Sigmoid colon (tissue), 7 donors: ENCODE measurements at regions of chr3 and their contacts with region 1.

Region 1: DNA sequence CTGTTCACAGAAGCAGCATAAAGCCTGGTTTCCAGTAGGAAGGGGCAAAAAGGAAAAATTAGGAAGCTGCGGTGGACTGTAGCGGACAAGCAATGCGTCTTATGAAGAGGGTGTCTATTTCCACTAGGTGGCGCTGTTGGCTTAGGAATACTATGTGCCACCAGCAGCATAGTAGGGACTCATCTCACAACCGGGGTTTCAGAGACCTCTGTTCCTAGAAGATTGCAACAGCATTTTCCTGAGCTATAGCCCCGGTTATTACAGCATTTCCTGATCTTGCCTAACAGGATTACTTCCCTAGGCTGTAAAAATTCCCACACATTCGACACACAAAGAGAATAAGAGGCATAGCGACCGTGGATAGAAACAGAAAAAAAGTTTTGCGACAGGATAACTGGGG is 683.0 kb downstream of the TBL1XR1 start:
- DNase-seq: no peak
- H3K4me3 ChIP-seq: no peak overlapping the region
- H3K27ac ChIP-seq: no peak overlapping the region
- H3K4me1 ChIP-seq: no peaks in the 10 kb centered on the region
- H3K27me3 ChIP-seq: no peaks in the 10 kb centered on the region
- CTCF ChIP-seq: peak; percentile 58 to 78 (median 72)
- EP300 ChIP-seq: no peak
- POLR2A ChIP-seq: no peak

Region 2: DNA sequence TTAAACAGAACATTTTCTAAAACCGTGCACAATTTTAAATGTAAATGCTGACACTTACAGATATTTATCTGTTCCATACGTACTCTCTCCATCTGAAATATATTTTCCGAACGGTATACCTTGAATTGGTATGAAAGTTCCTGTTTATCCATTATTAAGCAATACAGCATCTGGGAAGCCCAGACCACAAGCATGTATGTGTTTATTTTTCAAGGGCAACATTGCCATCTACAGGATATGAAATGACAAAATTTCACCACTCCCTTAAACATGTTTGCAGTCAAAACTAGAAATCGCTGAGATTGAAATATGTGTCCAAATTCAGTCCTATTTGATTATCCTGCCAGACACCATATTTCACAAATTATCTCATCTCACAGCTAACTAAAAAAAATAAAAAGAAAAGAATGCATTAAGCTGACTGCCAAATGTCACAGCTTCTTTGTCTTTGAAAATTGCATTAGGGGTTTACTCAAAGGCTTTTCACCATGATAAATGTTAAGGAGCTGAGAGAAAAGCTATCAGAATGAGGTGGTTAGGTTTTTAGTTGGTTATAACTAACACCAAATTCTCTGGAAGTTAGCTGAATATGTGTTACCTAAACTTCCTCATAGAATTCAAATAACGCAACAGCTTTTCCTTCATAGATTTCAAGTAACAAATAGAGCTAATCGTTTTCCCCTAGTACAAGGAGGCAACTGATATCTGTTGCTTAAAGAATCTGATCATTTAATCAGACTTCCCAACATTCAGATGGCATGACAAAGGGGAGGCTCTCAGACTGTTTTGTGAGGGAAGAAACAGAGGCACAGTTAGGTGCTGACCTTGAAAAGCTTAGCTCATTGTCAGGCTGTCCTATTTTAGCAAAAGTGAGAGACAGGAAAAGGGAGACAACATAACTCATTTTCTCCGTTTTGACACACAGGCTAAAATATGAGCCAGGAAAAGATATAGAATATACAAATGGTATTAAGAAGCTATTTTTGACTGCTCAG is 149.8 kb after region 1 on chr3:
- intact Hi-C with region 1: loop called (anchors 5 kb)
- DNase-seq: no peak
- H3K4me3 ChIP-seq: no peak overlapping the region
- H3K27ac ChIP-seq: no peak overlapping the region
- H3K4me1 ChIP-seq: peaks cover 0 to 20% (median 14%) of the 10 kb centered on the region in 4 donors
- H3K27me3 ChIP-seq: no peaks in the 10 kb centered on the region
- CTCF ChIP-seq: peak in 2 of 4 experiments; percentile 12 to 28
- EP300 ChIP-seq: no peak
- POLR2A ChIP-seq: no peak

Region 3: DNA sequence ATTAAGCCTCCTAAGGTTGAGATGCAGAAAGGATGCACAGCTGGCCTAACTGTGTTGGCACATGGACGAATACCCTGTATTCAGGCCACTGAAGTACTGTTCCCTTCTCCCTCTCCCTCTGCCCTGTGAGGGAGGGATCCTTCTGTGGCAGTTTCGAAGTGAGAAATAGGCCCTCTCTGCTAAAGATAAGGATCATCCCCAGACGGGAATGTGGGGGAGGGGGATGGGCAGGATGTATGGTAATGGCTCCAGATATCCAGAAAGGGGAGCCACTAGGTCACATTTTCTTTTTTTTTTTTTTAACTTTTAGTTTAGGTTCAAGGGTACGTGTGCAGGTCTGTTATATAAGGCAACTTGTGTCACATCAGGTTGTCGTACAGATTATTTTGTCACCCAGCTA is 219.8 kb after region 1 on chr3:
- intact Hi-C with region 1: no loop called
- DNase-seq: no peak
- H3K4me3 ChIP-seq: no peak overlapping the region
- H3K27ac ChIP-seq: no peak overlapping the region
- H3K4me1 ChIP-seq: peaks cover 0 to 14% (median 7%) of the 10 kb centered on the region in 4 donors
- H3K27me3 ChIP-seq: no peaks in the 10 kb centered on the region
- CTCF ChIP-seq: no peak
- EP300 ChIP-seq: no peak
- POLR2A ChIP-seq: no peak

Region 4: GRCh38 chr3:176814285-176814684 is 300.0 kb after region 1 on chr3:
- intact Hi-C with region 1: loop called (anchors 5 kb)
- DNase-seq: peak; percentile 71
- H3K4me3 ChIP-seq: no peak overlapping the region
- H3K27ac ChIP-seq: no peak overlapping the region
- H3K4me1 ChIP-seq: peaks cover 0 to 12% (median 8%) of the 10 kb centered on the region in 4 donors
- H3K27me3 ChIP-seq: no peaks in the 10 kb centered on the region
- CTCF ChIP-seq: peak; percentile 12 to 74 (median 38)
- EP300 ChIP-seq: no peak
- POLR2A ChIP-seq: no peak

Region 5: GRCh38 chr3:176939022-176939817 is 424.9 kb after region 1 on chr3:
- intact Hi-C with region 1: loop called (anchors 1 kb)
- DNase-seq: no peak
- H3K4me3 ChIP-seq: no peak overlapping the region
- H3K27ac ChIP-seq: no peak overlapping the region
- H3K4me1 ChIP-seq: peaks cover 0 to 17% (median 8%) of the 10 kb centered on the region in 4 donors
- H3K27me3 ChIP-seq: no peaks in the 10 kb centered on the region
- CTCF ChIP-seq: peak; percentile 20 to 72 (median 62)
- EP300 ChIP-seq: no peak
- POLR2A ChIP-seq: no peak